ENCODE measurements at regions of chr17 and their contacts with region 1.

Region 1: GRCh38 chr17:75393523-75394331 is 11.8 kb downstream of the GRB2 start:
- DNase-seq: peak; percentile 99
- ATAC-seq: peak; percentile 98
- H3K4me3 ChIP-seq: peak overlapping the region; percentile 81
- H3K27ac ChIP-seq: peak overlapping the region; percentile 57
- H3K4me1 ChIP-seq: peaks cover 30% of the 10 kb centered on the region
- H3K27me3 ChIP-seq: no peaks in the 10 kb centered on the region
- CTCF ChIP-seq: no peak

Region 2: GRCh38 chr17:75271233-75271954 is 122.3 kb before region 1 on chr17:
- CTCF ChIA-PET with region 1: interaction called, 18 read pairs
- POLR2A ChIA-PET with region 1: interaction called, 3 read pairs
- intact Hi-C with region 1: no loop called
- DNase-seq: peak; percentile 90
- ATAC-seq: peak; percentile 53
- H3K4me3 ChIP-seq: peak overlapping the region; percentile 73
- H3K27ac ChIP-seq: peak overlapping the region; percentile 36
- H3K4me1 ChIP-seq: peaks cover 20% of the 10 kb centered on the region
- H3K27me3 ChIP-seq: no peaks in the 10 kb centered on the region
- CTCF ChIP-seq: peak; percentile 57

Region 3: GRCh38 chr17:75339971-75340370 is 53.8 kb before region 1 on chr17:
- CTCF ChIA-PET with region 1: no interaction called
- POLR2A ChIA-PET with region 1: interaction called, 10 read pairs
- intact Hi-C with region 1: no loop called
- DNase-seq: no peak
- ATAC-seq: no peak
- H3K4me3 ChIP-seq: no peak overlapping the region
- H3K27ac ChIP-seq: no peak overlapping the region
- H3K4me1 ChIP-seq: no peaks in the 10 kb centered on the region
- H3K27me3 ChIP-seq: no peaks in the 10 kb centered on the region
- CTCF ChIP-seq: no peak

Region 4: DNA sequence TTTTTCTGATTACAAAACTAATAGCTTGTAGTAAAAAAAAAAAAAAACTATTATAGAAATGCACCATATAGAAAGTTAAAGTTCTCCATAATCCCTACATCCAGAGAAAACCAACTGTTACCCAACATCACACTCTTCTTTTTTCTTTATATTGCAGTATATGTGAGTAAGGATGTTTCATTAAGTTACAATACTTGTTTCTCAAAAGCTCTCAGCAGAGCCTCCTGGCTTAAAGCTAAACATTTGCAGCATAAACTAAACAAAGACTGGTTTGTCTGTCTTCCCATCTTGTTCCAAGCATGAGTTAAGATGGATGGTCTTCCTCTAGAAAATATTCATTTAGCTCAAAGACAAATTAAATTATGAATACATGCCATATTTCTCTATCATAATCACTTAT is 13.4 kb before region 1 on chr17:
- CTCF ChIA-PET with region 1: no interaction called
- POLR2A ChIA-PET with region 1: interaction called, 9 read pairs
- intact Hi-C with region 1: loop called (anchors 2 kb)
- DNase-seq: no peak
- ATAC-seq: peak; percentile 29; the same call in 1 of the 2 replicates
- H3K4me3 ChIP-seq: no peak overlapping the region
- H3K27ac ChIP-seq: no peak overlapping the region
- H3K4me1 ChIP-seq: no peaks in the 10 kb centered on the region
- H3K27me3 ChIP-seq: no peaks in the 10 kb centered on the region
- CTCF ChIP-seq: no peak

Region 5: DNA sequence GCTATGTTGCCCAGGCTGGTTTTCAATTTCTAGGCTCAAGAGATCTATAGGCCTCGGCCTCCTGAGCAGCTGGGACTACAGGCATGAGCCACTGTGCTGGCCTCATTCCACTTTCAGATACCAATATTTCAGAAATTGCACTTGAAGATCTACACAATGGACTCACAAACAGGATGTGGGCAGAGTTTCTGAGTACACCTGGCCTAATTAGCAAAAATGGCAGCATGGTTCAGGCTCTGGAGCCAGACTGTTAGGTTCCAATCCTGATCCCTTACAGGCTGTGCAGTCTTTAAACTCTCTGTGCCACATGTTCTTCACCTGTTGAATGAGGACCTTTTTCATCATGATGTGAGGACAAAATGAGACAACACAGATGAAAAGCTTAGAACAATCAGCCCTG is 814.4 kb after region 1 on chr17:
- CTCF ChIA-PET with region 1: no interaction called
- POLR2A ChIA-PET with region 1: no interaction called
- intact Hi-C with region 1: no loop called
- DNase-seq: no peak
- ATAC-seq: no peak
- H3K4me3 ChIP-seq: no peak overlapping the region
- H3K27ac ChIP-seq: no peak overlapping the region
- H3K4me1 ChIP-seq: peaks cover 19% of the 10 kb centered on the region
- H3K27me3 ChIP-seq: no peaks in the 10 kb centered on the region
- CTCF ChIP-seq: no peak

Measured in PC-3 (cell line).